ENCODE measurements at regions of chr21 and their contacts with region 1.

Region 1: GRCh38 chr21:37072988-37073416 is at the starts of genes PIGP and TTC3:
- DNase-seq: peak; percentile 97
- H3K4me3 ChIP-seq: peak within 1 kb of the TSS; percentile 88 to 93 (median 90)
- H3K27ac ChIP-seq: peak within 1 kb of the TSS; percentile 94 to 99 (median 98)
- H3K4me1 ChIP-seq: peaks cover 0 to 36% (median 26%) of the 10 kb centered on the region in 4 donors
- H3K27me3 ChIP-seq: no peaks in the 10 kb centered on the region
- CTCF ChIP-seq: no peak
- EP300 ChIP-seq: peak in 1 of 4 donors; percentile 48
- POLR2A ChIP-seq: peak; percentile 3 to 61
- total RNA-seq, gene PIGP: 10.2 to 36.7 (median 17.8) TPM
- total RNA-seq, gene TTC3: 108 to 151 (median 114) TPM

Region 2: DNA sequence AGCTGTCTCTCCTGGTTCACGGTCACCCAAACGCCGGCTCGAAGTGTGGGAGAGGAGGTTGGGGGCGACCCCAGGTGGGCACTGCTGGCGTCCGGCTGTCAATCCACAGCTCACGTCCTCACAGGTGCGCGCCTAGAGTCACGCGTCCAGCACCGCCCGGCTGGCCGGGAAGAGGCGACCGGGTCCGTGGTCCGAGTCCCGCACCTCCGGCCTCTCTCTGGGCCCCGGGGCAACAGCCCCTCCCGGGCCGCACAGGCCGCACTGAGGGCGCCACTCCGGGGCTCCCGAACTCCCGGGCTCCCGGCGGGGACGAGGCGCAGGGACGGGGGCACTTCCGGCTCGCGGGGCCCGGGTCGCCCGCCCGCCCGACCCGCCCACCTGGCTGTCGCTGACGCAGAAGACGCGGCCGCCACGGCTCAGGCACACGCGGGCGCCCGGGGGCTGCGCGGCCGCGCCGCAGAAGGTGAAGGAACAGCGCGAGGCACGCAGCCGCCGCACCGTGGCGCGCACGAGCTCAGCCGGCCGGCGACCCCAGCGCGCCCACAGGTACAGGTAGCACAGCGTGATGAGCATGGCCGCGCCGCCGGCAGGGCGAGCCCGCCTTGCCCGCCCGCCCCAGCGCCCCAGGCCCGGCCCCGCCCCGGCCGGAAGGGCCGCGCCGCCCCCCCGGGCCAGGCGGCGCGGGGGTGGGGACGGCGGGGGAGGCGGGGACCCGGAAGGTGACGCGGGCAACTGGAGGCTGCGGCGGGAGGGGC is 106.8 kb before region 1 on chr21 and contains the start of gene HLCS:
- intact Hi-C with region 1: loop called (anchors 5 kb)
- DNase-seq: peak; percentile 85
- H3K4me3 ChIP-seq: peak within 1 kb of the TSS; percentile 68 to 85 (median 77)
- H3K27ac ChIP-seq: peak within 1 kb of the TSS; percentile 78 to 87 (median 84)
- H3K4me1 ChIP-seq: peaks cover 0 to 20% (median 5%) of the 10 kb centered on the region in 4 donors
- H3K27me3 ChIP-seq: no peaks in the 10 kb centered on the region
- CTCF ChIP-seq: peak in 1 of 4 experiments; percentile 17
- EP300 ChIP-seq: no peak
- POLR2A ChIP-seq: no peak
- total RNA-seq, gene HLCS: 12.5 to 26.0 (median 15.6) TPM

Region 3: GRCh38 chr21:36989699-36990507 is 83.1 kb before region 1 on chr21:
- intact Hi-C with region 1: loop called (anchors 5 kb)
- DNase-seq: peak; percentile 97
- H3K4me3 ChIP-seq: peak overlapping the region; percentile 53 to 60 (median 58)
- H3K27ac ChIP-seq: peak overlapping the region; percentile 86 to 92 (median 88)
- H3K4me1 ChIP-seq: peaks cover 0 to 9% (median 0%) of the 10 kb centered on the region in 4 donors
- H3K27me3 ChIP-seq: peaks cover 0 to 13% (median 7%) of the 10 kb centered on the region in 3 donors
- CTCF ChIP-seq: peak in 2 of 4 experiments; percentile 70 to 94
- EP300 ChIP-seq: no peak
- POLR2A ChIP-seq: no peak

Region 4: GRCh38 chr21:37032877-37033471 is 40.0 kb before region 1 on chr21:
- intact Hi-C with region 1: loop called (anchors 5 kb)
- DNase-seq: peak; percentile 71
- H3K4me3 ChIP-seq: no peak overlapping the region
- H3K27ac ChIP-seq: peak overlapping the region in 3 of 4 donors; percentile 20 to 58 (median 48)
- H3K4me1 ChIP-seq: peaks cover 0 to 14% (median 6%) of the 10 kb centered on the region in 4 donors
- H3K27me3 ChIP-seq: no peaks in the 10 kb centered on the region
- CTCF ChIP-seq: no peak
- EP300 ChIP-seq: peak; percentile 43 to 92 (median 76)
- POLR2A ChIP-seq: no peak

Region 5: GRCh38 chr21:37563641-37564340 is 490.8 kb after region 1 on chr21:
- intact Hi-C with region 1: loop called (anchors 5 kb)
- DNase-seq: peak; percentile 96
- H3K4me3 ChIP-seq: peak overlapping the region; percentile 63 to 85 (median 74)
- H3K27ac ChIP-seq: peak overlapping the region; percentile 91 to 93 (median 92)
- H3K4me1 ChIP-seq: peaks cover 0 to 26% (median 17%) of the 10 kb centered on the region in 4 donors
- H3K27me3 ChIP-seq: no peaks in the 10 kb centered on the region
- CTCF ChIP-seq: peak in 3 of 4 experiments; percentile 8 to 43 (median 37)
- EP300 ChIP-seq: no peak
- POLR2A ChIP-seq: peak; percentile 18 to 21